Activated CD8-positive, alpha-beta T cell treated with anti-CD3 and anti-CD28 coated beads for 36 hours (primary cell): ENCODE measurements at regions of chr20 and their contacts with region 1.

Region 1: GRCh38 chr20:41664350-41664983 is 46.3 kb upstream of the CHD6 start:
- DNase-seq: peak; percentile 7
- ATAC-seq: no peak
- H3K4me3 Mint-ChIP-seq: no peak overlapping the region
- H3K27ac Mint-ChIP-seq: no peak overlapping the region
- H3K4me1 Mint-ChIP-seq: no peaks in the 10 kb centered on the region
- H3K27me3 Mint-ChIP-seq: peaks cover 21% of the 10 kb centered on the region
- CTCF ChIP-seq: no peak

Region 2: GRCh38 chr20:41607791-41608281 is 56.6 kb before region 1 on chr20:
- CTCF ChIA-PET with region 1: no interaction called
- POLR2A ChIA-PET with region 1: no interaction called
- intact Hi-C with region 1: no loop called
- DNase-seq: no peak
- ATAC-seq: no peak
- H3K4me3 Mint-ChIP-seq: no peak overlapping the region
- H3K27ac Mint-ChIP-seq: no peak overlapping the region
- H3K4me1 Mint-ChIP-seq: peaks cover 49% of the 10 kb centered on the region
- H3K27me3 Mint-ChIP-seq: no peaks in the 10 kb centered on the region
- CTCF ChIP-seq: no peak

Region 3: DNA sequence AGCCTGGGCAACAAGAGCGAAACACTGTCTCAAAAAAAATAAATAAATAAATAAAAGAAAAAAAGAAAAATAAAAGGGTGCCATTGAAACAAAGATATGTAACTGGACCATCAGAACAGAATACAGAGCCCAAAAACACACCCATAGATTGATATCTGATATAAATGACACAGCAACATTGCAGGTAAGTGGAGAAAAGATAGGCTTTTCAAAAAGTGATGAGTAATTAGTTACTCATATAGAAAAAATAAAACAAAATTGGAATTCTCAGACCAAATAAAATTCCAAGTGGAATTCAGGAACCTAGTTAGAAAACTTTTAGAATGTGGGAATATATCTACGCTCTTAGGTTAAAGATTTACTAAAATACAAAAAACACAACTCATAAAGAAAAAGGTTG is 14.3 kb after region 1 on chr20:
- CTCF ChIA-PET with region 1: no interaction called
- POLR2A ChIA-PET with region 1: no interaction called
- intact Hi-C with region 1: no loop called
- DNase-seq: no peak
- ATAC-seq: no peak
- H3K4me3 Mint-ChIP-seq: no peak overlapping the region
- H3K27ac Mint-ChIP-seq: no peak overlapping the region
- H3K4me1 Mint-ChIP-seq: no peaks in the 10 kb centered on the region
- H3K27me3 Mint-ChIP-seq: peaks cover 3% of the 10 kb centered on the region
- CTCF ChIP-seq: no peak

Region 4: GRCh38 chr20:41726727-41727126 is 62.3 kb after region 1 on chr20:
- CTCF ChIA-PET with region 1: no interaction called
- POLR2A ChIA-PET with region 1: no interaction called
- intact Hi-C with region 1: loop called (anchors 10 kb)
- DNase-seq: no peak
- ATAC-seq: no peak
- H3K4me3 Mint-ChIP-seq: no peak overlapping the region
- H3K27ac Mint-ChIP-seq: no peak overlapping the region
- H3K4me1 Mint-ChIP-seq: no peaks in the 10 kb centered on the region
- H3K27me3 Mint-ChIP-seq: peaks cover 1% of the 10 kb centered on the region
- CTCF ChIP-seq: no peak

Region 5: DNA sequence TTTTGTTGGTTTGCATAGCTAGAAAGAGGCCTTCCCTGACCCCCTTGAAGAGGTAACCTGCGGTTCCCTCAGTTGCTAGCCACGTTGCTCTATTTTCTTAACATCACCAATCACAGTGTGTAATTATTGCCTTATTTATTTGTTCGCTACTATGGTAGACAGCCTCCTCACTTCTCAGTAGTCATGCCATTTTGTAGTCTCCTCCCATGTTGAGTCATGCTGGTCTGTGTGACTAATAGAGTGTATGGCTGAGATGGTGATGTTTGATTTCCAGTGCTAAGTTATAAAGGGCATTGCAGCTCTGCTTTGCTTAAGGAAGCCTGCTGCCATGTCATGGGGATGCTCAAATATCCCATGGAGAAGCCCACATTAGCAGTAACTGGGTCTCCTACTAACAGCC is 190.3 kb after region 1 on chr20:
- CTCF ChIA-PET with region 1: no interaction called
- POLR2A ChIA-PET with region 1: no interaction called
- intact Hi-C with region 1: no loop called
- DNase-seq: no peak
- ATAC-seq: peak; percentile 30
- H3K4me3 Mint-ChIP-seq: no peak overlapping the region
- H3K27ac Mint-ChIP-seq: no peak overlapping the region
- H3K4me1 Mint-ChIP-seq: no peaks in the 10 kb centered on the region
- H3K27me3 Mint-ChIP-seq: peaks cover 11% of the 10 kb centered on the region
- CTCF ChIP-seq: no peak